WTC11 (cell line): ENCODE measurements at regions of chr2 and their contacts with region 1.

Region 1: GRCh38 chr2:127157651-127158470 is 50.9 kb upstream of the BIN1 start:
- DNase-seq: peak; percentile 78
- ATAC-seq: peak; percentile 98
- H3K4me3 Mint-ChIP-seq: no peak overlapping the region
- H3K27ac Mint-ChIP-seq: no peak overlapping the region
- H3K4me1 Mint-ChIP-seq: peaks cover 20% of the 10 kb centered on the region
- H3K27me3 Mint-ChIP-seq: no peaks in the 10 kb centered on the region
- CTCF ChIP-seq: no peak; the same call in 1 of the 2 replicates

Region 2: DNA sequence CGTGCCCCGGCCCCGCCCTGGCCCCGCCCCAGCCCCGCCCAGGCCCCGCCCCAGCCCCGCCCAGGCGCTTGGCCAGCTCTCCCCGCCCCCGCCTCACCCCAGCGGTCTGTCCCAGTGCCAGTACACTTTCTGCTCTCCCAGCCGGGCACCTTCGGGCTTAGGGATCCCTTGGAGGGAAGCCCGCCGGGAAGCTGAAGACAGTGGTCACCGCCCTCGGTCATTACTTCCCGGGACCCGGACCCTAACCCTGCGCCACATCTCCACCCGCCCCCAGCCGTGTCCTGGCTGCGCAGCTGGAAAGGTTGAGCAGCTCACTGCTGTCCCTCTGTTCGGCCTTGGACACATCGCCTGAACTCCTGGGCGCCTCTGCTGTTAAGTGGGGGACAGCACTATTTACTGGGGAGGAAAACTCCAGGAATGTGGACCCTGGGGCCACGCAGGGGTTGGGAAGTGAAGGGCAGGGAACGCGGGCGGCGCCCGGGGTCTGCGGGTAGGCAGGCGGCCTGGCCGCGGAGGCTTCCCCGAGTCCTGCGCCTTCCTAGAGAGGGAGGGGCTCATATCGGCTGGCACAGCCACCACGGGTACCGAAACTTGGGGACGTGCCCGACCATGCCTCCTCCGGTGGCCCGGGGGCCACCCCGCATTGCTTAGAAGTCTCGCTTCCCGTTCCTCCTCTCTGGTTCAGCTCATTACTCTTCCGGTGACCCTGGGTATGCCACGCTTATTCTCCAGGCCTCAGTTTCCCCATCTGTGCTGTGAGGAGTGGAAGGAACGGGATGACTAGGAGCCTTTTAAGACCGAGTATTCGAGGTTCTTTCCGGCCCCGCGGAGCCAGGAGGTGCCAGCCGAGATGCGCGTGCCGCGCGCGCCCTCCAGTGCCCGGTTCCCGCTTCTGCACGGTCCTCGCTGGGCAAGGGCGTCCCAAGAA is 380.9 kb before region 1 on chr2:
- CTCF ChIA-PET with region 1: no interaction called
- POLR2A ChIA-PET with region 1: no interaction called
- DNase-seq: peak; percentile 84
- ATAC-seq: peak; percentile 78
- H3K4me3 Mint-ChIP-seq: peak overlapping the region; percentile 82
- H3K27ac Mint-ChIP-seq: no peak overlapping the region
- H3K4me1 Mint-ChIP-seq: peaks cover 11% of the 10 kb centered on the region; the same call in 1 of the 2 replicates
- H3K27me3 Mint-ChIP-seq: peaks cover 17% of the 10 kb centered on the region
- CTCF ChIP-seq: peak; percentile 79

Region 3: GRCh38 chr2:127049927-127050802 is 107.7 kb before region 1 on chr2:
- CTCF ChIA-PET with region 1: interaction called, 17 read pairs
- POLR2A ChIA-PET with region 1: no interaction called
- DNase-seq: peak; percentile 84
- ATAC-seq: peak; percentile 81
- H3K4me3 Mint-ChIP-seq: no peak overlapping the region
- H3K27ac Mint-ChIP-seq: no peak overlapping the region
- H3K4me1 Mint-ChIP-seq: no peaks in the 10 kb centered on the region
- H3K27me3 Mint-ChIP-seq: peaks cover 3% of the 10 kb centered on the region
- CTCF ChIP-seq: peak; percentile 91

Region 4: DNA sequence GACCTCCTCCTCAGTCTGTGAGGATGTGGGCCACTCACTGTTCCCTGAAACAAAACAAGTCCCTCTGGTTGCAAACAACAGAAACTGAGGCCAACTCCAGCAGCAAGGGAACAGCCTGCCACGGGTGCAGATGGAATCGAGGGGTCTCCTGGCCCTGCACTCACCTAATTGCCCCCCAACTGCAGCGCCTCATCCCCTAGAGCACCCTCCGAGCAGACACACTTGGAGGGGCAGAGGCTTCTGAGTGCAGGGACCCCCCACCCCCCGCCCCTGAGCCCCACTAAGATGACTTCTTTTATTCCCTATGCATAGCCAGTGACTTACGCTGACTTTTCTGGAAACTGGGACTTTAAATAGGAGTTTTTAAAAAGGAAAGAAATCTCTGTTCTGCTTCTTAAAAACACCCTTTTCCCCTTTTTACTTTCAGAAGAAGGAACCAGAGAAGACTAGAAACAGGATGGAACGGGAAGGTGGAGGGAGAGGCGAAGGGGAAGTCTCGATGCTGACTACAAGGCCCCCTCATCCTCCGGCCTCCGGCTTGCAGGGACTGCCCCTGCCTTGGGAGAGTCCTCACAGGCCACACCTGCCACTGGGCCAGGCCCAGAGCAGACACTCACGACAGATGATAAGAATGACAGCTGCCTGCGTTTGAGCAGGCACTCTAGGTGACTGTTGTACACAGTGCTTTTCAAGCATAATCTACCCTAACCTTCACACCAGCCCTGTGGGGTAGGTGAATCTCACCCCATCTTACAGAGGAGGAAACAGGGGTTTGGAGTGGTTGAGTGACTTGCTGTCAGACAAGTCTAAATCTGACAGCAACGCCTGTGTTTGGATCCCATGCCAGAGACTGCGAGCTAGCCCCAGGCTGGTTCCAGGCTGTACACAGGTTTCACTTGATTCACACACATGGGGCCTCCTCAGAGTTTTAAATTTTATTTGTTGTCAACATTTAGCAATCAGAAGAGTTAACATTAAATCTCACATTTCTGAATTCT is 22.7 kb before region 1 on chr2:
- CTCF ChIA-PET with region 1: no interaction called
- POLR2A ChIA-PET with region 1: no interaction called
- DNase-seq: no peak
- ATAC-seq: peak; percentile 32; the same call in 1 of the 2 replicates
- H3K4me3 Mint-ChIP-seq: no peak overlapping the region
- H3K27ac Mint-ChIP-seq: no peak overlapping the region
- H3K4me1 Mint-ChIP-seq: no peaks in the 10 kb centered on the region
- H3K27me3 Mint-ChIP-seq: 0 out of 2 replicates have a peak, but pooled peaks cover 2% of the 10 kb centered on the region
- CTCF ChIP-seq: no peak

Region 5: GRCh38 chr2:127874378-127875271 is 716.8 kb after region 1 on chr2:
- CTCF ChIA-PET with region 1: no interaction called
- POLR2A ChIA-PET with region 1: no interaction called
- DNase-seq: no peak
- ATAC-seq: no peak
- H3K4me3 Mint-ChIP-seq: no peak overlapping the region
- H3K27ac Mint-ChIP-seq: 0 out of 2 replicates have a peak overlapping the region, but pooled peaks have one; percentile 57
- H3K4me1 Mint-ChIP-seq: 0 out of 2 replicates have a peak, but pooled peaks cover 2% of the 10 kb centered on the region
- H3K27me3 Mint-ChIP-seq: no peaks in the 10 kb centered on the region
- CTCF ChIP-seq: no peak